PC-9 (cell line): ENCODE measurements at regions of chr15 and their contacts with region 1.

Region 1: DNA sequence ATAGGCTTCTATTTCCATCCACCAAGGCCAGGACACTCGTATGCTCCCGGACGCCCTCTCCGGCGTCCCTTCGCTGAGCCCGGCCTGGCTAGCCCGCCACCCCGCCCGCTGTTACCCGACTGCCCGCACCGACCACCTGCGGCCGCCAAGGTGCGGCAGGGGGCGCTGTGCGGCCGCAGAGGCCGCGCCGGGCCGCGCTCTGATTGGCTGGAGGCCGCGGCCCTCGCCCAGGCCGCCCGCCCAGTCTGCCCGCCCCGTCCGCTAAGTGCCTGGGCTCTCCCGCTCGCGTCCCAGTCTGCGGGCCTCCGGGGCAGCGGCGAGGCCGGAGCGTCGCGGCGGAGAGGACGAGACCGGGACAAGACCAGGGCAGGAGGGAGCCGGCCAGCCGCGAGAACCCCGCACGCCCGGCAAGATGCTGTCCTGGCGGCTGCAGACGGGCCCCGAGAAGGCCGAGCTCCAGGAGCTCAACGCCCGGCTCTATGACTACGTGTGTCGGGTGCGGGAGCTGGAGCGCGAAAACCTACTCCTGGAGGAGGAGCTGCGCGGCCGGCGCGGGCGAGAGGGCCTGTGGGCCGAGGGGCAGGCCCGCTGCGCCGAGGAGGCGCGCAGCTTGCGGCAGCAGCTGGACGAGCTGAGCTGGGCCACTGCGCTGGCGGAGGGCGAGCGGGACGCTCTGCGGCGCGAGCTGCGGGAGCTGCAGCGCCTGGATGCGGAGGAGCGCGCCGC is at the start of gene SYNM:
- DNase-seq: peak; percentile 45 to 81
- H3K4me3 ChIP-seq: peak within 1 kb of the TSS; percentile 59
- H3K27ac ChIP-seq: no peak within 1 kb of the TSS
- H3K4me1 ChIP-seq: no peaks in the 10 kb centered on the region
- H3K27me3 ChIP-seq: 0 out of 2 replicates have a peak, but pooled peaks cover 4% of the 10 kb centered on the region
- CTCF ChIP-seq: peak; percentile 71
- total RNA-seq, gene SYNM: 2.2 and 2.4 TPM in 2 replicates

Region 2: DNA sequence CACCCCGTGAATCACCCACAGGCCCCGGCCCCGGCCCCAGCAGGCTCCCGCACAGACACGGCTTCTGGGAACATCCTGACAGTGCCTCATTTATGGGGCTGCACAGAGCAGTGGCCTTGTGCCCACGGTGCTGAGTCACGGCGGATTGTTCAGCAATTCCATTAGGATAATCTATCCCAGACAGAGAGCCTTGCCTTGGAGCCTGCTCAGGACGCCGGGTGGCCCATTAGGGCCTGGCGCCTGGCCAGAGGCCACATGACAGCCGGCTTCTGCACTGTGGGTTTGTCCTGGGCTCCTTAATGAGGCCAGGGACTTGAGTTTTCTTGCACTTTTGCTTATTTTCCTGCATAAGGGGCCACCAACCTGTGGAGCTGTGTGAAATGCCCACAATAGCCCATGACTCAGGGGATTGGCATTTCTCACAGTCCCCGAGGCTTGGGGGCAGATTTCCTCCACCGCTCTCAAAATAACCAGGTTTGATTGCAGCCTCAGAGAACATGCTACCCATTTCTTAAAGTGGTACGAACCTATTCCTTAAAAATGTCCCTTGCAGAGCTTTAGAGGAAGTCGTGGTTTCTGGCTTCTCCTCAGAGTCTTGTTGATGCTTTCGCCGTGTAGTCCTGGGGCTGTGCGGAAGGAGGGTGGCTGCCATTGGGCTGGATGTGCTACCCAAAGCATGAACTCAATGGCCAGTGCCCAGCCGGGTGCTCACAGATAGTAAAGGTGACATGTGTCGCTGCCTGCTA is 18.9 kb after region 1 on chr15:
- CTCF ChIA-PET with region 1: no interaction called
- POLR2A ChIA-PET with region 1: no interaction called
- intact Hi-C with region 1: loop called (anchors 1 kb)
- DNase-seq: peak; percentile 87 to 89
- H3K4me3 ChIP-seq: peak overlapping the region; percentile 62
- H3K27ac ChIP-seq: peak overlapping the region; percentile 93
- H3K4me1 ChIP-seq: peaks cover 37% of the 10 kb centered on the region
- H3K27me3 ChIP-seq: no peaks in the 10 kb centered on the region
- CTCF ChIP-seq: no peak

Region 3: GRCh38 chr15:99213187-99213811 is 108.3 kb after region 1 on chr15:
- CTCF ChIA-PET with region 1: interaction called, 3 read pairs
- POLR2A ChIA-PET with region 1: no interaction called
- intact Hi-C with region 1: loop called (anchors 1 kb)
- DNase-seq: peak in 1 of 2 experiments; percentile 69
- H3K4me3 ChIP-seq: no peak overlapping the region
- H3K27ac ChIP-seq: no peak overlapping the region
- H3K4me1 ChIP-seq: no peaks in the 10 kb centered on the region
- H3K27me3 ChIP-seq: no peaks in the 10 kb centered on the region
- CTCF ChIP-seq: peak; percentile 92

Region 4: GRCh38 chr15:99335508-99335907 is 230.6 kb after region 1 on chr15:
- CTCF ChIA-PET with region 1: no interaction called
- POLR2A ChIA-PET with region 1: no interaction called
- intact Hi-C with region 1: no loop called
- DNase-seq: no peak
- H3K4me3 ChIP-seq: no peak overlapping the region
- H3K27ac ChIP-seq: no peak overlapping the region
- H3K4me1 ChIP-seq: 0 out of 2 replicates have a peak, but pooled peaks cover 2% of the 10 kb centered on the region
- H3K27me3 ChIP-seq: no peaks in the 10 kb centered on the region
- CTCF ChIP-seq: no peak

Region 5: GRCh38 chr15:99345832-99346462 is 241.0 kb after region 1 on chr15:
- CTCF ChIA-PET with region 1: no interaction called
- POLR2A ChIA-PET with region 1: no interaction called
- intact Hi-C with region 1: no loop called
- DNase-seq: no peak
- H3K4me3 ChIP-seq: no peak overlapping the region
- H3K27ac ChIP-seq: no peak overlapping the region
- H3K4me1 ChIP-seq: peaks cover 10% of the 10 kb centered on the region; the same call in 1 of the 2 replicates
- H3K27me3 ChIP-seq: no peaks in the 10 kb centered on the region
- CTCF ChIP-seq: no peak